Posterior cingulate gyrus (tissue), 11 donors: ENCODE measurements at regions of chr16 and their contacts with region 1.

Region 1: GRCh38 chr16:67461600-67462592 is 19.1 kb downstream of the ATP6V0D1 start:
- DNase-seq: peak in 1 of 10 donors; percentile 39

Region 2: GRCh38 chr16:67279296-67280089 is 182.4 kb before region 1 on chr16 and contains the start of gene PLEKHG4:
- intact Hi-C with region 1: loop called (anchors 10 kb)
- DNase-seq: peak in 6 of 10 donors; percentile 12 to 75 (median 48)

Region 3: DNA sequence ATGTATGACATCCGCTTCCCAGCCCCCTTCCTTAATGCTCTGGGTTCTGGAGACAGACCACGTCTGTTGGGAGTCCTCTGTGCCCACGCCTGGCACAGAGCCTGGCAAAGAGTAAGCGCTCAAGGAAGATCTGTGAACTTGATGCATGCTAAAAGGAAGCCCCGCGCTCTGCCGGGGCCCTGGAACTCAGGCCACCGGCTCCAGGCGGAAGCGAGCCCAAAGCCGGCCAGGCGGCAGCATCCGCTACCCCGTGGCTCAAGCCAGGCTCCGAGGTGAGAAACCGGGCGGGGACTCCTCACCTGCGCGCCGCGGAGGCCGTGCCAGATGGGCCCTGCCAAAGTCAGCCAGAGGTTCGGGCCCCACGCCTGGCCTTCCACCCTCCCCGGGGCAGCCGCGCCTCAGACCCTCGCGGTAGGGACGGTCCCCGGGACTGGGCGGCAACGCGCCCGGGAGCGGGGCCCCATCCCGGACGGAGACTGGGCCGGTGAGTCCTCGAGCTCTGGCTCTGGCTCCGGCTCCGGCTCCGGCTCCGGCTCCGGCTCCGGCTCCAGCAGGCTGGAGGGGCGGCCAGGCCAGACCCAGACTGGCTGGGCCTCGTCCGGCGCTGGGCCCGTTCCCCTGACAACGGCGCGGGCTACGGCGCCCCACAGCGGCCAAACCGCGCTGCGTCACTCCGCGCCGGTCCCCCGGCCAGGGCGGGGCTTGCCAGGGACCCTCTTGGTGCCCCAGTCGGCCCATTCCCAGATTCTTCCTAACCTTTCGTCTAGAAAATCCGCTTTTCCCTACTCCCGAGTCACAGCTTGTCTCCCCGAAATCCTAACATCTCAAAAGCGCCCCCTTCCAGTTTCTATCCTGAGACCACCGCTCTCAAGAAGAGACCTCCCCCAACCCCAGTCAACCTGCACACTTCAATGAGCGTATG is 45.8 kb before region 1 on chr16 and contains the start of gene ZDHHC1:
- intact Hi-C with region 1: loop called (anchors 10 kb)
- DNase-seq: peak; percentile 67 to 96 (median 76)

Region 4: GRCh38 chr16:68553186-68553585 is 1091.3 kb after region 1 on chr16:
- intact Hi-C with region 1: no loop called
- DNase-seq: no peak